Right ventricle myocardium inferior (tissue), 1 donor: ENCODE measurements at regions of chr11 and their contacts with region 1.

Region 1: DNA sequence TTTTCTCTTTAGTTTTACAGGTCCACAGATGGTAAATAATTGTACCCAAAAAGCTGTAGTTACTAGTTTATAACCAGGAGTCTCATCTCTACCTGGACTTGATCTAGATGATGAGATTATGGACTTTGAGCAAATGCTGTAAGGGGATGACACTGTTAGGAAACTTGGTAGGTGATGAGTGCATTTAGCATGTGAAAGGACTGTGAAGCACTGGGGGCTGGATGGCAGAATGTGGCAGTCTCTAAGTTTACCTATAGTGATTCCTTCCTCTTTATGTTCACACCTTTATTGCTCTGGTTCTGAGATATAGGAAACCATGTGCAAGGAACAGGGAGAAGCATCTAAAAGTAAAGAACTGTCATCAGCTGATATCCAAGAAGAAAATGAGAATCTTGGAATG is 230.7 kb upstream of the CHORDC1 start:
- DNase-seq: no peak
- ATAC-seq: no peak

Region 2: DNA sequence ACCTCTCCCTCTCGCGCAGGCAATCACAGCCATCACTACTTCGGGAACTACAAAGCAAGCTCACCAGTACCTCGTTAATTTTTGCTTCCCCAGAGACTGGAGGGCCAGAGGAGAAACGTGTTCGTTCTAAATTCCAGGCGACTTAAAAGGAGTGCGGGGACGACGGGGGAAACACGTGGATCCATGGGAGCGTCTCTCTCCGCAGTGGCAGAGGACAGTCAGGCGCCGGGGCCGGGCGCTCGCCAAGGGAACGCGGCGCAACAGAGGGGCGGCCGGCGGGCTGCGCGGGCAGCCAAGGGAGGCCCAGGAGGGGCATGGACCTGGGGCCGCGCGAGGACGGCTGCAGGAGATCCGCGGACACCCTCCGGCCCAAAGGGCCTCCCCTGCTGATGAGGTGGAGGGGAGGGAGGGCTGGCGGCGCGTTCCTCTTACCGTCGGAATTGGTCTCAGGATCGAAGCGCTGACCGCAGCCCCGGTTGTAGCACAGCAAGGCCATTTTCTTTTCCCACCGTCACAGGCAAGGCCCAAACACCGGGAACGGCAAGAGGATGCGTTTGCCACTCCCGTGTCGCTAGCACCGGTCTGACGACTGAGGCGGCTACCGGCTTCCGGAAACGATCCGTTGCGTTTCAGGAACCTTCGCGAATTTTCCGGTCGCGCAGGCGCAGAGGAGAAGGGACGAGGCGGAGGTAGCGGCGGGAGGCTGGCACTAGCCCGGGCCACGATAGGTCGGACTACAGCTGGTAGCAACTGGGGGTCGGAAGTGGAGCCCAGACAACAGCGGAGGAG is 230.9 kb before region 1 on chr11 and contains the start of gene CHORDC1:
- intact Hi-C with region 1: no loop called
- DNase-seq: peak; percentile 94
- ATAC-seq: peak; percentile 97
- total RNA-seq, gene CHORDC1: 42.7 TPM

Region 3: DNA sequence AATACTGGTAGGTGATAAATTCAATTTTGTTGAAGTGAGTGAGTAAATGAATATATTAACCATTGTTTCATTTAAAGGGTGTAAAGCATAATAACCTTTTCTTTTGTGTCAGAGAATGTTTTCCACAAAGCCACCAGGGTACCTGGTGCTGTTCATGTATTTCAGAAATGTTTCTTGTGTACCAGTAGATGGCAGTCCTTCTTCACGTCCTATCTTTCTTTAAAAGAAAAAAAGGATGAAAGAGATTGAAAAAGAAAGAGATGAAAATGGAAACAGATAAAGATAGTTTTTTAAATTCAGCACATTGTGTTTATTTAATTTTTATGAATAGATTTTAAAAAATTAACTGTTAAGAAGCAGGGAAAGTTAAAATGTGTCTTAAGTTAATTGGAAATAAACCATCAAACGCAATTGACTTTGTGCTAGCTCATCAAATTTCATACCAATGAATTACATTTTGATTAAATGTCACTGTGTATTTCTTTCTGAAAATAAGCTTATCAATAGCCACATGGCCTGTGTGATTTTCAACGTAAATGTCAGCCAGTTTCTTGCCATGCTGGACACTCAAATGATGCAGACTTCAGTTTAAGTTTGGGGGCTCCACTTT is 165.2 kb before region 1 on chr11:
- intact Hi-C with region 1: loop called (anchors 2 kb)
- DNase-seq: no peak
- ATAC-seq: no peak

Region 4: GRCh38 chr11:90493379-90493778 is 39.9 kb after region 1 on chr11:
- intact Hi-C with region 1: no loop called
- DNase-seq: no peak
- ATAC-seq: no peak

Region 5: GRCh38 chr11:90700789-90701439 is 247.4 kb after region 1 on chr11:
- intact Hi-C with region 1: no loop called
- DNase-seq: no peak
- ATAC-seq: no peak